ENCODE measurements at regions of chr19 and their contacts with region 1.

Region 1: GRCh38 chr19:45643024-45643926 is 4.1 kb upstream of the EML2 start:
- DNase-seq: peak; percentile 86
- H3K4me3 Mint-ChIP-seq: peak overlapping the region; percentile 64
- H3K27ac Mint-ChIP-seq: peak overlapping the region; percentile 98
- H3K4me1 Mint-ChIP-seq: peaks cover 33% of the 10 kb centered on the region
- H3K27me3 Mint-ChIP-seq: no peaks in the 10 kb centered on the region

Region 2: GRCh38 chr19:45423589-45424190 is 219.6 kb before region 1 on chr19 and contains the start of gene ERCC1:
- intact Hi-C with region 1: loop called (anchors 5 kb)
- DNase-seq: peak; percentile 79
- H3K4me3 Mint-ChIP-seq: peak within 1 kb of the TSS; percentile 93
- H3K27ac Mint-ChIP-seq: peak within 1 kb of the TSS; percentile 96
- H3K4me1 Mint-ChIP-seq: peaks cover 45% of the 10 kb centered on the region
- H3K27me3 Mint-ChIP-seq: peaks cover 7% of the 10 kb centered on the region
- total RNA-seq, gene ERCC1: 114 and 118 TPM in 2 replicates

Region 3: GRCh38 chr19:45439569-45440254 is 203.6 kb before region 1 on chr19:
- intact Hi-C with region 1: no loop called
- DNase-seq: peak; percentile 78
- H3K4me3 Mint-ChIP-seq: peak overlapping the region; percentile 69
- H3K27ac Mint-ChIP-seq: peak overlapping the region; percentile 67
- H3K4me1 Mint-ChIP-seq: peaks cover 23% of the 10 kb centered on the region
- H3K27me3 Mint-ChIP-seq: peaks cover 2% of the 10 kb centered on the region

Region 4: DNA sequence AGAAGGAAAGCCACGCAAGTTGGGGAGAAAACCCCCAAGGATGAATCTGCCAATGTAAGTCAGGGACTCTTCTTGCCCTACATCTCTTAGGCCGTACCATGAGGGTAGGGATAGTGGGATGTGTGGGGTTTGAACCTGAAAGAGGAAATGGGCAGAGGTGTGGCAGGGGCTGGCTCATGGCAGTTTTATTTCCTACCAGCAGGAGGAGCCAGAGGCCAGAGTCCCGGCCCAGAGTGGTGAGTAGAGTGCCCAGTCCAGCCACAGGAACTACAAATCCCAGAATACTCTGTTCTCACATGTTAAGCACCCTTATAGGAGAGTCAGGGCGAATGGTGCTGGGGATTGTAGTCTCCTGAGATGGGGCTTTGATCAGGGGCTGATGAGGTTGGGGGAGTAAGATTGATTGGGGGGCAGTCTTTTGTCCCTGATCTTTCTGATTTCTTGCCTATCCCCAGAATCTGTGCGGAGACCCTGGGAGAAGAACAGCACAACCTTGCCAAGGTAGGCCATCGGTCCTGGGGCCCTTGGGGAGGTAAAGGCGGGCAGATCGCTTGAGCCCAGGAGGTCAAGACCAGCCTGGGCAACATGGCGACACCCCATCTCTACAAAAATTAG is 119.5 kb before region 1 on chr19:
- intact Hi-C with region 1: loop called (anchors 1 kb)
- DNase-seq: peak; percentile 69
- H3K4me3 Mint-ChIP-seq: no peak overlapping the region
- H3K27ac Mint-ChIP-seq: peak overlapping the region; percentile 24
- H3K4me1 Mint-ChIP-seq: peaks cover 16% of the 10 kb centered on the region
- H3K27me3 Mint-ChIP-seq: no peaks in the 10 kb centered on the region

Region 5: GRCh38 chr19:45607071-45608029 is 35.9 kb before region 1 on chr19:
- intact Hi-C with region 1: loop called (anchors 1 kb)
- DNase-seq: peak; percentile 24
- H3K4me3 Mint-ChIP-seq: no peak overlapping the region
- H3K27ac Mint-ChIP-seq: peak overlapping the region; percentile 88
- H3K4me1 Mint-ChIP-seq: peaks cover 12% of the 10 kb centered on the region
- H3K27me3 Mint-ChIP-seq: peaks cover 11% of the 10 kb centered on the region

Region 6: GRCh38 chr19:45630493-45630919 is 12.8 kb before region 1 on chr19:
- intact Hi-C with region 1: loop called (anchors 1 kb)
- DNase-seq: no peak
- H3K4me3 Mint-ChIP-seq: no peak overlapping the region
- H3K27ac Mint-ChIP-seq: peak overlapping the region; percentile 46
- H3K4me1 Mint-ChIP-seq: peaks cover 14% of the 10 kb centered on the region
- H3K27me3 Mint-ChIP-seq: no peaks in the 10 kb centered on the region

Region 7: GRCh38 chr19:45657520-45658167 is 14.4 kb after region 1 on chr19:
- intact Hi-C with region 1: no loop called
- DNase-seq: no peak
- H3K4me3 Mint-ChIP-seq: no peak overlapping the region
- H3K27ac Mint-ChIP-seq: no peak overlapping the region
- H3K4me1 Mint-ChIP-seq: no peaks in the 10 kb centered on the region
- H3K27me3 Mint-ChIP-seq: peaks cover 9% of the 10 kb centered on the region

Region 8: GRCh38 chr19:45692187-45693105 is 49.2 kb after region 1 on chr19 and contains the start of gene QPCTL:
- intact Hi-C with region 1: loop called (anchors 1 kb)
- DNase-seq: peak; percentile 98
- H3K4me3 Mint-ChIP-seq: peak within 1 kb of the TSS; percentile 94
- H3K27ac Mint-ChIP-seq: peak within 1 kb of the TSS; percentile 99
- H3K4me1 Mint-ChIP-seq: peaks cover 14% of the 10 kb centered on the region
- H3K27me3 Mint-ChIP-seq: no peaks in the 10 kb centered on the region
- total RNA-seq, gene QPCTL: 24.2 and 26.7 TPM in 2 replicates

Region 9: DNA sequence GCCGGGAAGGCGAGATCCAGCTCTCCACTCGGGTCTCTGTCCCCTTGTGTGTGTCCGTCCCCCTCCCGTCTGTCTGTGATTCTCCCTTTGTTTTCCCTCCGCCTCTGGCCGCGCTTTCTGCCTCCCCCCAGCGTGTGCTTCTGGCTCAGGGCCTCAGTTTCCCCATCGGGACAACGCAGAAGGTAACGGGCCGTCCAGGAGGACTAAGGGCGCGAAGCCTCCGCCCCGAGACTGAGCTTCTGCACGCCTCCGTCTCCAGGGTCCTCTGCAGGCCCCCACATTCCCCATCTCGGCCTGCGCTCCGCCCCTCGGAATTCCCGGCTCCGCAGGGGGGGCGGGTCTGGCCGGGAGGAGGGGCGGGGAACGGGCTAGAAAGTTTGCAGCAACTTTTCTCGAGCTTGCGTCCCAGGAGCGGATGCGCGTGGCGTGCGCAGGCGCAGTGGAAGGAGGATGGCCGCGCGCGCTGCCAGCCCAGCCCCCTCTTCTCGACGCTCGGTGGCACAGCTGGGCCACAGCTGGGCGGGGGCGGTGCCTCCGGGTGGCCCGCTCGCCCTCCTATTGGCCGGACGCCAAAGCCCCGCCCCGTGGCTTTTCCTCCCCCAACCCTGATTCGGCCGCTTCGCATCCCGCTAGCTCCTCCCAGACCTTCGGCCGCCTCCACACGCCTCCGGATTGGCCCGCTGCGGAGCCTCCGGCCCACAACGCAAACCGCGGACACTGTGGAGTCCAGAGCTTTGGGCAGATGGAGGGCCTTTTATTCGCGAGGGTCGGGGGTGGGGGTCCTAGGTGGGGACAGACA is 125.9 kb after region 1 on chr19 and contains the start of gene SIX5:
- intact Hi-C with region 1: no loop called
- DNase-seq: peak; percentile 95
- H3K4me3 Mint-ChIP-seq: peak within 1 kb of the TSS; percentile 86
- H3K27ac Mint-ChIP-seq: peak within 1 kb of the TSS; percentile 68
- H3K4me1 Mint-ChIP-seq: peaks cover 8% of the 10 kb centered on the region
- H3K27me3 Mint-ChIP-seq: peaks cover 12% of the 10 kb centered on the region
- total RNA-seq, gene SIX5: 4.8 and 5.7 TPM in 2 replicates